ENCODE measurements at regions of chr7 and their contacts with region 1.

Region 1: GRCh38 chr7:144738708-144739314 is 97.0 kb downstream of the TPK1 start:
- DNase-seq: peak in 8 of 14 experiments; percentile 1 to 66 (median 22)
- ATAC-seq: peak; percentile 65
- H3K4me3 ChIP-seq: no peak overlapping the region
- H3K4me3 Mint-ChIP-seq: no peak overlapping the region
- H3K27ac ChIP-seq: no peak overlapping the region
- H3K27ac Mint-ChIP-seq: no peak overlapping the region
- H3K4me1 ChIP-seq: no peaks in the 10 kb centered on the region
- H3K4me1 Mint-ChIP-seq: peaks cover 8% of the 10 kb centered on the region
- H3K27me3 ChIP-seq: no peaks in the 10 kb centered on the region
- H3K27me3 Mint-ChIP-seq: no peaks in the 10 kb centered on the region
- CTCF ChIP-seq: peak; percentile 87

Region 2: DNA sequence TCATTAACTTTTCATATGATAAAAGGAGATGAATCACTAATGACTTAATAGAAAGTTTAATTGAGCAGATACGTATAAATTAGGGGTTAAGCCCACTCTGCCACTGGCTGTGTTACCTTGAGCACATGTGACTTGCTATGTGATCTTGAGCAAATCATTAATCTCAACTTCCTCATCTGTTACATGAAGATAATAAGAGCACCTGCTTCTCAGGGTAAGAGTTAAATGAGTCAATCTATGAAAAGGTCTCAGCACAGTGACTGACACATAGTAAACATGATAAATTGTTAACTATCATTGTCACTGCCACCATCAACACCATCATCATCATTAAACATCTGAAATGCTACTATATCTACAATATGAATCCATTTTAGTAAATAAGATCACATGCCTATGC is 13.7 kb before region 1 on chr7:
- CTCF ChIA-PET with region 1: no interaction called
- POLR2A ChIA-PET with region 1: no interaction called
- intact Hi-C with region 1: no loop called
- DNase-seq: no peak
- ATAC-seq: no peak
- H3K4me3 ChIP-seq: no peak overlapping the region
- H3K4me3 Mint-ChIP-seq: no peak overlapping the region
- H3K27ac ChIP-seq: no peak overlapping the region
- H3K27ac Mint-ChIP-seq: no peak overlapping the region
- H3K4me1 ChIP-seq: no peaks in the 10 kb centered on the region
- H3K4me1 Mint-ChIP-seq: no peaks in the 10 kb centered on the region
- H3K27me3 ChIP-seq: no peaks in the 10 kb centered on the region
- H3K27me3 Mint-ChIP-seq: no peaks in the 10 kb centered on the region
- CTCF ChIP-seq: no peak

Region 3: DNA sequence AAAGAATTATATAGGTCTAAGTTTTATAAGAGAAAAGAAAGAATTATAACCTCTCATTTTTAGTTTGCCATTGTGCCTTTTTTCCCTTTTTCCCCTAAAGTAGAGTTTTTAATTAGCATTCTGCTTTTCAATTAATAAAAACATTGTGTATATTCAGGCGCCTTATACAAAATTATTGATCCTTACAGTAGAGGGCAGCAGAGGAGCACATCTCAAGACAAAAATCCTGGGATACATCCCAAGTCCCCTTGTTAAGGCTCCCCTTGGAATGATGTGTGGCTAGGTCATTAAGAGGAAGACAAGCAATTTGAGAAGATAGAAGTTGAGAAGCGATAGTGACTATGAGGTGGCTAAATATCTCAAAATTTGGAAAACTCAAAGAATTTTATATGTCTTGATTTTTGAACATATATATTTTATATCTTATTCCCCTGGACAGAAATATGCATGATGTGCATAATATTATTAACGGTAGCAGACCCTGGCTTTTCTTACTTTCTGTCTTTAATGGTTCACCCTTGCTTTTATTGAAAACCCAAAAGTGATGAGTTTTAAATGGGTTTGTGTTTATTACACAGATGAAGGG is 116.1 kb after region 1 on chr7:
- CTCF ChIA-PET with region 1: no interaction called
- POLR2A ChIA-PET with region 1: no interaction called
- intact Hi-C with region 1: loop called in 1 of 2 experiments (anchors 5 kb)
- DNase-seq: peak in 2 of 14 experiments; percentile 20 to 22
- ATAC-seq: no peak
- H3K4me3 ChIP-seq: no peak overlapping the region
- H3K4me3 Mint-ChIP-seq: no peak overlapping the region
- H3K27ac ChIP-seq: no peak overlapping the region
- H3K27ac Mint-ChIP-seq: no peak overlapping the region
- H3K4me1 ChIP-seq: no peaks in the 10 kb centered on the region
- H3K4me1 Mint-ChIP-seq: peaks cover 4% of the 10 kb centered on the region
- H3K27me3 ChIP-seq: no peaks in the 10 kb centered on the region
- H3K27me3 Mint-ChIP-seq: no peaks in the 10 kb centered on the region
- CTCF ChIP-seq: peak; percentile 71

Region 4: GRCh38 chr7:144869082-144869481 is 130.3 kb after region 1 on chr7:
- CTCF ChIA-PET with region 1: no interaction called
- POLR2A ChIA-PET with region 1: no interaction called
- intact Hi-C with region 1: no loop called
- DNase-seq: no peak
- ATAC-seq: no peak
- H3K4me3 ChIP-seq: no peak overlapping the region
- H3K4me3 Mint-ChIP-seq: no peak overlapping the region
- H3K27ac ChIP-seq: no peak overlapping the region
- H3K27ac Mint-ChIP-seq: no peak overlapping the region
- H3K4me1 ChIP-seq: no peaks in the 10 kb centered on the region
- H3K4me1 Mint-ChIP-seq: no peaks in the 10 kb centered on the region
- H3K27me3 ChIP-seq: no peaks in the 10 kb centered on the region
- H3K27me3 Mint-ChIP-seq: peaks cover 21% of the 10 kb centered on the region
- CTCF ChIP-seq: no peak

Region 5: DNA sequence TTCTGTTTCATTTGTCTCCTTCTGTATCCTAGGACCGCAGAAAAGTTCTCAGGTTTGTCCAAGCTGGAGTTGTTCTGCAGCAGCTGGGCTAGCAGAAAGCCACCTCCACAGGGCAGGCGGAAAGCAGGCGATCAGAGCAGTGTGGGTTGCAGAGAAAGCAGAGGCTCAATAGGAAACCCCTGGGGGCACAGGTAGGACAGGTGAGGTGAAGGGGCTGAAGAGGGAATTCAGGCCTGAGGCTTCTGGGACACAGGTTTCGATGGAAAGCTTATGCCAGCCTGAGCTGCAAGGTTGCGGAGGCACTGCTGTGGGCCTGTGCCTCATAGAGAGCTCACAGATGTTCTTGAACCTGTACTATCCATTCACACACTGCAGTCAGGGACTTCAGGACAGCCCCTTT is 291.9 kb after region 1 on chr7:
- CTCF ChIA-PET with region 1: no interaction called
- POLR2A ChIA-PET with region 1: no interaction called
- intact Hi-C with region 1: loop called in 1 of 2 experiments (anchors 5 kb)
- DNase-seq: no peak
- ATAC-seq: no peak
- H3K4me3 ChIP-seq: no peak overlapping the region
- H3K4me3 Mint-ChIP-seq: no peak overlapping the region
- H3K27ac ChIP-seq: no peak overlapping the region
- H3K27ac Mint-ChIP-seq: no peak overlapping the region
- H3K4me1 ChIP-seq: no peaks in the 10 kb centered on the region
- H3K4me1 Mint-ChIP-seq: no peaks in the 10 kb centered on the region
- H3K27me3 ChIP-seq: no peaks in the 10 kb centered on the region
- H3K27me3 Mint-ChIP-seq: peaks cover 3% of the 10 kb centered on the region
- CTCF ChIP-seq: no peak

Region 6: DNA sequence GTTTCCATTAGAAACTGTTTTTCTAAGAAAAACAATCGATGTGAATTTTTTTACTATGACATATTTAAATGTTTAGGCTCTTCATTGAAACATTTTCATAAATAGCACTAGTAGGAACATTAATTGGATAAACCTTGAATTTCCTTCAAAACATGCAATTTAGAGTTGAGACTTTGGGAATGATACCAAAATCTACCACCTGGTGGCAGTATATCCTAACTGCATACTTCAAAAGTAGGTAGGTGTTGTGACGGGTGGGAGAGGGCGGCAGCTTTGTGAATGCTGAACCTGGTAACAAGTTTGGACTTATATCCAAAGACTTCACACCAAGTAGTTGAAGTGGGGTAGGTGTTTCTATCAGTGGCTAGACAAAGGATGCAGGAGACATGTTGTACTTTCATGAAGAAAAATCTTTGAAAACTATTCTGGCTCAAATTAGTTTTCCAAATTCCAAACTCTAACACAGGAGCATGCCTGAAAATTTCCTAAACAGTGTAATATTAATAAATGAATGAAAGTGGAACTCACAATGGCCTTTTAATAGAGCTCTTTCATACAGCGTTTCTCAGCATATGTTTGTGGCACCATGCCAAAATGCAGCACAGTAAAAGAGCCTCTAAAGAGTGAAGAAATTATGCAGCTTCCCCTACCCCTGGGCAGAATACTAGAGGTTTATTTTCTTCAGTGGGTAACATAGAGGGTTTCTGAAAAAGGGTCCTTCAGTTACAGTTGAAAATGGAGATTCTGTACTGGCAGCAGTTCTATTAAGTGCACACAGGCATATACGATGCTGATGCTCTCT is 298.0 kb after region 1 on chr7:
- CTCF ChIA-PET with region 1: no interaction called
- POLR2A ChIA-PET with region 1: no interaction called
- intact Hi-C with region 1: loop called (anchors 1 to 5 kb)
- DNase-seq: peak in 13 of 14 experiments; percentile 2 to 65 (median 10)
- ATAC-seq: peak; percentile 46
- H3K4me3 ChIP-seq: no peak overlapping the region
- H3K4me3 Mint-ChIP-seq: no peak overlapping the region
- H3K27ac ChIP-seq: no peak overlapping the region
- H3K27ac Mint-ChIP-seq: no peak overlapping the region
- H3K4me1 ChIP-seq: no peaks in the 10 kb centered on the region
- H3K4me1 Mint-ChIP-seq: no peaks in the 10 kb centered on the region
- H3K27me3 ChIP-seq: no peaks in the 10 kb centered on the region
- H3K27me3 Mint-ChIP-seq: peaks cover 24% of the 10 kb centered on the region
- CTCF ChIP-seq: peak; percentile 87

Region 7: GRCh38 chr7:146090023-146090645 is 1351.3 kb after region 1 on chr7:
- CTCF ChIA-PET with region 1: no interaction called
- POLR2A ChIA-PET with region 1: no interaction called
- intact Hi-C with region 1: loop called in 1 of 2 experiments (anchors 2 kb)
- DNase-seq: peak in 3 of 14 experiments; percentile 17 to 26 (median 19)
- ATAC-seq: peak; percentile 44
- H3K4me3 ChIP-seq: no peak overlapping the region
- H3K4me3 Mint-ChIP-seq: no peak overlapping the region
- H3K27ac ChIP-seq: no peak overlapping the region
- H3K27ac Mint-ChIP-seq: no peak overlapping the region
- H3K4me1 ChIP-seq: no peaks in the 10 kb centered on the region
- H3K4me1 Mint-ChIP-seq: no peaks in the 10 kb centered on the region
- H3K27me3 ChIP-seq: no peaks in the 10 kb centered on the region
- H3K27me3 Mint-ChIP-seq: no peaks in the 10 kb centered on the region
- CTCF ChIP-seq: peak; percentile 71

Measured in CD4-positive, alpha-beta T cell (primary cell).